CD8-positive, alpha-beta memory T cell (primary cell): ENCODE measurements at regions of chr2 and their contacts with region 1.

Region 1: DNA sequence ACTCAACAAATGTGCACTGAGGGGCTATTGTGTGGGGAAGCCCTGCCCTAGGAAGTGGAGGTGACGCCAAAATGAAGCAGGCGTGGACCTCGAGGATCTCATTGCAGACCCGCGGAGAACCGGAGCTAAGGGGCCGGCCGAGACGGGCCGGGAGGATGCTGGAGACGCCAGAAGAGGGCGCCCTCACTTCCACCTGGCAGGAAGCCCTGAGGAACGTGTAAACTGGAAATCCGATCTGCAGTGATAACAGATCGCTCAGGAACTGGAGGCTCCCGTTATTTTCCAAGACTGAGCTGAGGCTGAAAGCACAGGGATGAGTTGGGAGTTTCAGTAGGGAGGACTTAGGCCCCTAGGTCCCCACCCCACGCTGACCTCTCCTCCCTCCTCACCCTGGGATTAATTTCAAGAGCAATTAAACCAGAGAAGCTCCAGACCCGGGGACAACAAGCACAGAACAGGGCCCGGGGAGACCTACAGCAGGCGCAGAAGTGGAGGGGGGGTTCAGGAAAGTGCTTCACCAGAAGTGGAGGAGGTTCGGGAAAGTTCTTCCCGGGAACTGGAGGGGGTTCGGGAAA is 7.7 kb upstream of the COL6A3 start:
- DNase-seq: peak; percentile 64 to 84 (median 73)
- H3K4me3 ChIP-seq: peak overlapping the region; percentile 24
- H3K4me3 Mint-ChIP-seq: peak overlapping the region in 6 of 7 donors; percentile 59 to 83 (median 69)
- H3K27ac ChIP-seq: no peak overlapping the region
- H3K27ac Mint-ChIP-seq: peak overlapping the region in 6 of 8 donors; percentile 19 to 95 (median 38)
- H3K4me1 ChIP-seq: peaks cover 6% of the 10 kb centered on the region
- H3K4me1 Mint-ChIP-seq: peaks cover 10 to 16% (median 12%) of the 10 kb centered on the region in 3 donors
- H3K27me3 ChIP-seq: no peaks in the 10 kb centered on the region
- H3K27me3 Mint-ChIP-seq: peaks cover 0 to 2% of the 10 kb centered on the region in 2 donors

Region 2: DNA sequence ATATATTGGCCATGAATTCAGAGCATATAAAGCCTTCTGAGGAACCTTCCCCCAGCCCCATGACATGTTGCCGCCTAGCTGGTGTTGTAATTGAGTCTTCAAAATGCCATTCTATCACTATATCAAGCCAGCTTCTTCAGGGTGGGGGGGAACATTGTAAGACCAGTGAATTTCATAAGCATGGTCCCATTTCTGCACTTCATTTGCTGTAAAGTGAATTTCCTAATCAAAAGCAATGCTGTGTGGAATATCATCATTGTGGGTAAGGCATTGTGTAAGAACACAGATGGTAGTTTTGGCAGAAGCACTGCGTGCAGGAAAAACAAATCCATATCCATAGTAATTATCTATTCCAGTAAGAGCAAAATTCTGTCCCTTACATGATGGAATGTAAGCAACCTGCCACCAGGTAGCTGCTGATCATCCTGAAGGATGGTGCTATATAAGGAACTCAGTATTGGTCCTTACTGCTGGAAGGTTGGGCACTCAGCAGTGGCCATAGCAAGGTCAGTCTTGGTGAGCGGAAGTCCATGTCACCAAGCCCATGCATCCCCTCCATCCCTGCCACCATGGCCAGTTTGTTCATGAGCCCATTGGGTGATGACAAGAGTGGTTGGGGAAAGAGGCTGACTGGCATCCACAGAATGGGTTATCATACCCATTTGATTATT is 176.5 kb before region 1 on chr2:
- CTCF ChIA-PET with region 1: no interaction called
- POLR2A ChIA-PET with region 1: no interaction called
- DNase-seq: no peak
- H3K4me3 ChIP-seq: no peak overlapping the region
- H3K4me3 Mint-ChIP-seq: no peak overlapping the region
- H3K27ac ChIP-seq: no peak overlapping the region
- H3K27ac Mint-ChIP-seq: no peak overlapping the region
- H3K4me1 ChIP-seq: no peaks in the 10 kb centered on the region
- H3K4me1 Mint-ChIP-seq: no peaks in the 10 kb centered on the region
- H3K27me3 ChIP-seq: no peaks in the 10 kb centered on the region
- H3K27me3 Mint-ChIP-seq: peaks cover 10 to 42% of the 10 kb centered on the region in 2 donors

Region 3: GRCh38 chr2:237434866-237435311 is 13.3 kb after region 1 on chr2:
- CTCF ChIA-PET with region 1: interaction called, 81 read pairs
- POLR2A ChIA-PET with region 1: interaction called, 16 read pairs
- DNase-seq: peak; percentile 42 to 81 (median 71)
- H3K4me3 ChIP-seq: peak overlapping the region; percentile 62
- H3K4me3 Mint-ChIP-seq: peak overlapping the region; percentile 55 to 91 (median 78)
- H3K27ac ChIP-seq: no peak overlapping the region
- H3K27ac Mint-ChIP-seq: peak overlapping the region; percentile 48 to 98 (median 90)
- H3K4me1 ChIP-seq: peaks cover 75% of the 10 kb centered on the region
- H3K4me1 Mint-ChIP-seq: peaks cover 60 to 74% (median 67%) of the 10 kb centered on the region in 3 donors
- H3K27me3 ChIP-seq: no peaks in the 10 kb centered on the region
- H3K27me3 Mint-ChIP-seq: peaks cover 0 to 1% of the 10 kb centered on the region in 2 donors

Region 4: DNA sequence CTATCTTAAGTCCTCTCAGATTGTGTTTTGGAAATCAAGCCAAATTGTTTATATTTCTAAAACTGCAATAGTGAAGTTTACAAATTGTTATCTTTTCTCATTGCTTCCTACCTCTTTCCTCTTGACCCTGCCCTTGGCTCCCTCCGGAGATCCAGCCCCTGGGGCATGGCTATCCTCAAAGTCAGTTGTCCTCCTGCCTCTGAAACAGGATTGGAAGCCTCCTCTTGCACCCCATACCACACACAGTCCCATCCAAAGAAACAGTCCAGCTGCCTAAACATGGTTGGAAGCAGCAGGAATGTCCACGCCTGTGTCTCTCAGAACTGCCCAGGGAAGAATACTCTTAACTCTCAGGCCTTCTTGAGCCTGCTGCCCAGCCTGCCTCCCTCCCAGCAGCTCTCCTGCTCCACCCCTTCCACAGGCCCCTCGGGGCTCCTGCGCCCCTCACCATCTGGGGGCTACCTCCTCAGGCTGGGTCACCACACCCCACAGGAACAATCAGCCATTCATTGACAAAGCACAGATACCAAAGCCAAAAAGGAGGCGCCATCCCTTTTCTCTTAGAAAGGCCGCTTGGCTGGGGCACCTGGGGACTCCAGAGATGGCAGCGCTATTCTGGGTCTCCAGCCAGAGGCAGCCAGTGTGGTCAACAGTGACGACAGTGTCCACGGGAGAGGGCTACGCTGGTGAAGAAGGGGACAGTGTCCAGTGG is 22.6 kb after region 1 on chr2:
- CTCF ChIA-PET with region 1: interaction called, 22 read pairs
- POLR2A ChIA-PET with region 1: no interaction called
- DNase-seq: no peak
- H3K4me3 ChIP-seq: no peak overlapping the region
- H3K4me3 Mint-ChIP-seq: no peak overlapping the region
- H3K27ac ChIP-seq: no peak overlapping the region
- H3K27ac Mint-ChIP-seq: no peak overlapping the region
- H3K4me1 ChIP-seq: peaks cover 23% of the 10 kb centered on the region
- H3K4me1 Mint-ChIP-seq: peaks cover 15 to 23% (median 20%) of the 10 kb centered on the region in 3 donors
- H3K27me3 ChIP-seq: no peaks in the 10 kb centered on the region
- H3K27me3 Mint-ChIP-seq: peaks cover 0 to 1% of the 10 kb centered on the region in 2 donors

Region 5: GRCh38 chr2:237451643-237452469 is 30.2 kb after region 1 on chr2:
- CTCF ChIA-PET with region 1: interaction called, 22 read pairs
- POLR2A ChIA-PET with region 1: no interaction called
- DNase-seq: no peak
- H3K4me3 ChIP-seq: no peak overlapping the region
- H3K4me3 Mint-ChIP-seq: no peak overlapping the region
- H3K27ac ChIP-seq: no peak overlapping the region
- H3K27ac Mint-ChIP-seq: peak overlapping the region in 1 of 8 donors; percentile 80
- H3K4me1 ChIP-seq: no peaks in the 10 kb centered on the region
- H3K4me1 Mint-ChIP-seq: no peaks in the 10 kb centered on the region
- H3K27me3 ChIP-seq: no peaks in the 10 kb centered on the region
- H3K27me3 Mint-ChIP-seq: peaks cover 0 to 3% of the 10 kb centered on the region in 2 donors

Region 6: DNA sequence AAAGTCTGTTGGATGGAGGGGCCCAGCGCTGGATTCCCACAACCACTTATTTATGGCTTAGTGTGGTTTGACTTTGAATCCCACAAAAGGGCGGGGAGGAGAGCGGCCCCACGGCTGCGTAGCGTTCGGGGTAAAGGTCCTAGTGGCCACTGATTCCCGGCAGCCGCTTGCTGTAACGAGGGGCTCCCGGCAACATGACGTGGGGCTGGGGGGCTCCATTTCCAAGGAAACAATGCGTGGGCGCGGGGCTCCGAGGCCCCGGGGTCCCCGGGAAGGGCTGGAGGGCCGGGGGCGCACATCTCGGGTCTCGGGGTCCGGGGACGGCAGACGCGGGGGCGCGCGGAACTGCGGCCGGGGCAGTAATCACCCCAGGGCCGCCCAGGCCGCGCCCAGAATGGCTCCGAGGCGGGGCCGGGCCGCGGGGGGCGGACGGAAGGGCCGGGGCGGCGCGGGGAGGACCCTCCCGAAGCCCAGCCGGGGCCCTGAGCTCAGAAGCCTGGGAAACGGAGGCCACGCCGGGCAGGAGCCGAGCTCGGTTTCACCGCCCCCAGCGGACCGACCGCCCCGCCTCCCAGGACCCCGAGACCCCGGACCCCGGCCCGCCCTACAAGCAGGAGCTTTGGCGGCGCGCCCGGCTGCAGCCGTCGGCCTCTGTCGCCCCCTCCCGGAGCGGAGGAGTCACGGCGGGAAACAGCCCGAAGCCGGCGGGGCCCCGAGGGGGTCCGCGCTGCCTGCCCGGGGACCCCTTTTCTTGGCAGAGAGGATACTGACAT is 53.5 kb after region 1 on chr2:
- CTCF ChIA-PET with region 1: interaction called, 191 read pairs
- POLR2A ChIA-PET with region 1: interaction called, 6 read pairs
- DNase-seq: peak; percentile 61 to 78 (median 67)
- H3K4me3 ChIP-seq: peak overlapping the region; percentile 56
- H3K4me3 Mint-ChIP-seq: peak overlapping the region; percentile 82 to 95 (median 87)
- H3K27ac ChIP-seq: no peak overlapping the region
- H3K27ac Mint-ChIP-seq: peak overlapping the region in 6 of 8 donors; percentile 52 to 91 (median 78)
- H3K4me1 ChIP-seq: peaks cover 11% of the 10 kb centered on the region
- H3K4me1 Mint-ChIP-seq: peaks cover 4 to 11% (median 5%) of the 10 kb centered on the region in 3 donors
- H3K27me3 ChIP-seq: peaks cover 10% of the 10 kb centered on the region
- H3K27me3 Mint-ChIP-seq: peaks cover 7 to 26% of the 10 kb centered on the region in 2 donors

Region 7: GRCh38 chr2:237505188-237505939 is 83.7 kb after region 1 on chr2:
- CTCF ChIA-PET with region 1: no interaction called
- POLR2A ChIA-PET with region 1: no interaction called
- DNase-seq: no peak
- H3K4me3 ChIP-seq: no peak overlapping the region
- H3K4me3 Mint-ChIP-seq: no peak overlapping the region
- H3K27ac ChIP-seq: no peak overlapping the region
- H3K27ac Mint-ChIP-seq: no peak overlapping the region
- H3K4me1 ChIP-seq: no peaks in the 10 kb centered on the region
- H3K4me1 Mint-ChIP-seq: no peaks in the 10 kb centered on the region
- H3K27me3 ChIP-seq: no peaks in the 10 kb centered on the region
- H3K27me3 Mint-ChIP-seq: peaks cover 13 to 49% of the 10 kb centered on the region in 2 donors

Region 8: DNA sequence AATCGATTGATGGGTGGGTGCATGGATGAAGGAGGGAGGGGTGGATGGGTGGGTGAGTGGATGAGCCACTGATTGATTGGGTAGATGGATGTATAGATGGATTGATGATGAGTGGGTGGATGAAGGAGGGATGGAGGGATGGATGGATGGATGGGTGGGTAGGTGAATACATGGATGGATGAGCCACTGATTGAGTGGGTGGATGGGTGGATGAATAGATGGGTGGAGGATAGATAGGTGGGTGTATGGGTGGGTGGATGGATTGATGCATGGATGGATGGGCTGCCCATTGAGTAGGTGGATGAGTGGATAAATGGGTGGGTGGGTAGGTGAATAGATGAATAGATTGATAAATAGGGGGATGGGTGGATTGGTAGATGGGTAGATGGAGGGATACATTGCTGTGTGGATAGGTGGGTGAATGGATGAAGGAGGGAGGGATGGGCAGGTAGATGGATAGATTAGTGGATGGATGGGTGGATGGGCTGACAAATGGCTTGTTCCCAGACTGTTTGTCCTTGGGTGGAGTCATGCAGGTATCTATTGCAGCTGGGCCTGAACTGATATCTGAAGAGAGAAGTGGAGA is 96.5 kb after region 1 on chr2:
- CTCF ChIA-PET with region 1: no interaction called
- POLR2A ChIA-PET with region 1: no interaction called
- DNase-seq: no peak
- H3K4me3 ChIP-seq: no peak overlapping the region
- H3K4me3 Mint-ChIP-seq: no peak overlapping the region
- H3K27ac ChIP-seq: no peak overlapping the region
- H3K27ac Mint-ChIP-seq: no peak overlapping the region
- H3K4me1 ChIP-seq: no peaks in the 10 kb centered on the region
- H3K4me1 Mint-ChIP-seq: no peaks in the 10 kb centered on the region
- H3K27me3 ChIP-seq: no peaks in the 10 kb centered on the region
- H3K27me3 Mint-ChIP-seq: no peaks in the 10 kb centered on the region

Region 9: DNA sequence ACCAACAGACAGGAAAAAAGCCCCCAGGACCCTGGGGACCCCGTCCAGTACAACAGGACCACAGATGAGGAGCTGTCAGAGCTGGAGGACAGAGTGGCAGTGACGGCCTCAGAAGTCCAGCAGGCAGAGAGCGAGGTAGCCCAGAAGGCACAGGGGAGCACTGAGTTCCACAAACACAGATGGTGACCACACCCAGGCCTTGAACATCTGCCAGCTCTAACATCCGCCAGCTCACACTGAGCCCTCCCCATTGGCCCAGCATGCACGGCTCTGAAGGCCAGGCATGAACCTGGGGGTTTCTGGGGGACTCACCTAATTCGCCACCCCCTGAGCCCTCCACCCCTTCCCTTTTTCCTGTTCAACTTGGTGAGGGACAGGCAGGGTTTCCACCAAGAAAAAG is 119.2 kb after region 1 on chr2:
- CTCF ChIA-PET with region 1: no interaction called
- POLR2A ChIA-PET with region 1: no interaction called
- DNase-seq: no peak
- H3K4me3 ChIP-seq: no peak overlapping the region
- H3K4me3 Mint-ChIP-seq: no peak overlapping the region
- H3K27ac ChIP-seq: no peak overlapping the region
- H3K27ac Mint-ChIP-seq: no peak overlapping the region
- H3K4me1 ChIP-seq: no peaks in the 10 kb centered on the region
- H3K4me1 Mint-ChIP-seq: no peaks in the 10 kb centered on the region
- H3K27me3 ChIP-seq: peaks cover 3% of the 10 kb centered on the region
- H3K27me3 Mint-ChIP-seq: peaks cover 3 to 37% of the 10 kb centered on the region in 2 donors

Region 10: DNA sequence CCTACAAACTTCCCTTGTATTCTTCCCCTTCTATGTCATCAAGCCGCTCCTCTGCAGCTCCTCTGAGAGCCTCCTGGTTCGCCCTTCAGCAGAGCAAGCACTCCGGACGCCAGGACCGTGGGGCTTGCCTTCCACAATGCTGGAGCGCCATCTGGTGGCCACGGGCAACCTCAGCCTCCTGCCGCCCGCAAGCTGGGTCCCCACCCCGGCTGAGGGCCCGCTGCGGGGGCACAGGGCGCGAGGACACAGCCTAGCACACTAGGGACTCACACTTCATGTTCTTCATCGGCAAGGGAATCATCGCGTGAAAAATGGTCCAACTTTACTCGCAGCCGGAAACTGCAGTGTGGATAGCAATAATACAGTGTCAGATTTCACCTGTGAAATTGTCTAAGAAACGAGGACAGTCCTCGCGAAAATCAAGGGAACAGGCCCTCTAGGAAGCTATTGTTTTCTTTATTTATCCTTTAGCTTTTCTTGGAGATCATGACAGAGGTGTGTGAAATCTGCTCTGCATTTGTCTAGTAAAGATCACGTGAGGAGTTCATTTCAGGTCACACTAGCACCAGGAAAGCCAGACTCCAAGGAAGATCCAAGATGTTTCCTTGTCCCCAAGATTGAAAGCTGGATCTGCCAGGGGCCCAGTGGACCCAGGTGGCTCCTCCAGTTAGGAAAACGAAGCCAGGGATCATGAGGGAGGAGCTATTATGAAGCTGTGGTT is 150.6 kb after region 1 on chr2:
- CTCF ChIA-PET with region 1: interaction called, 13 read pairs
- POLR2A ChIA-PET with region 1: no interaction called
- DNase-seq: peak; percentile 68 to 82 (median 77)
- H3K4me3 ChIP-seq: no peak overlapping the region
- H3K4me3 Mint-ChIP-seq: no peak overlapping the region
- H3K27ac ChIP-seq: no peak overlapping the region
- H3K27ac Mint-ChIP-seq: peak overlapping the region in 1 of 8 donors; percentile 17
- H3K4me1 ChIP-seq: peaks cover 6% of the 10 kb centered on the region
- H3K4me1 Mint-ChIP-seq: peaks cover 0 to 5% (median 5%) of the 10 kb centered on the region in 3 donors
- H3K27me3 ChIP-seq: no peaks in the 10 kb centered on the region
- H3K27me3 Mint-ChIP-seq: peaks cover 14 to 25% of the 10 kb centered on the region in 2 donors